A673 (cell line): ENCODE measurements at regions of chr16 and their contacts with region 1.

Region 1: GRCh38 chr16:12819126-12820117 is 15.7 kb upstream of the CPPED1 start:
- DNase-seq: peak; percentile 71
- H3K4me3 ChIP-seq: no peak overlapping the region
- H3K27ac ChIP-seq: no peak overlapping the region
- H3K4me1 ChIP-seq: no peaks in the 10 kb centered on the region
- H3K27me3 ChIP-seq: no peaks in the 10 kb centered on the region
- CTCF ChIP-seq: peak; percentile 81

Region 2: GRCh38 chr16:12455287-12455798 is 364.1 kb before region 1 on chr16:
- CTCF ChIA-PET with region 1: no interaction called
- POLR2A ChIA-PET with region 1: no interaction called
- intact Hi-C with region 1: loop called (anchors 2 kb)
- DNase-seq: peak; percentile 53
- H3K4me3 ChIP-seq: no peak overlapping the region
- H3K27ac ChIP-seq: no peak overlapping the region
- H3K4me1 ChIP-seq: no peaks in the 10 kb centered on the region
- H3K27me3 ChIP-seq: no peaks in the 10 kb centered on the region
- CTCF ChIP-seq: peak; percentile 81

Region 3: DNA sequence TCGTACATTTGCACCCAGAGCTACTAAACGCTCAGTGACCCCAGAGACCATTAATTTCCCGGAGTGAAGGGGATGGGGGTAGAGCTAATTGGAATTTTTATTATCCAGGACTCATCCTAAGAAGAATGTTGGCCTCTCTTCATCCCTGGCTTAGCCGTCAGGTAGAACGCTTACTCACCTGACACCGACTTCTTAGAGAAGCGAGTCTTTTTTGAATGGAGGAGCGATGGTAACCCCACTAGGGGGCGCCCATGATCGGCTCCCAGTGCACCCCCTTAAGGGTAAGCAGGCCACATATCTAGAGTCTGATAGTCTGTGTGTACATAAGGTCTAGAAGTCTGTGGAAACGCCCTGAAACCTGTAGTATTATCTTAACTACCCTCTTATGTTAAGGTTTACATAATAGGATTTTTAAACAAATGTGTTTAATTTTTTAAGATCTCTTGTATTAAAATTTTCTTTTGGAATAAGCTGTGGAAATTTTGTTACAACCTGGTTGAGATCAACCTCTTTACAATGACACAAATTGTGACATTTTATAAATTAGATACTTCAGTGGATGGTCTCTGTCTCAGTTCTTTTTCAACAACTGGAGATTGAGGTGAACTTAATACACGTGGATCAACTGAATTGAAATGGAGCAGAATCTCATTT is 245.6 kb before region 1 on chr16:
- CTCF ChIA-PET with region 1: interaction called, 3 read pairs
- POLR2A ChIA-PET with region 1: no interaction called
- intact Hi-C with region 1: loop called (anchors 2 kb)
- DNase-seq: peak; percentile 46
- H3K4me3 ChIP-seq: no peak overlapping the region
- H3K27ac ChIP-seq: no peak overlapping the region
- H3K4me1 ChIP-seq: no peaks in the 10 kb centered on the region
- H3K27me3 ChIP-seq: no peaks in the 10 kb centered on the region
- CTCF ChIP-seq: peak; percentile 74

Region 4: GRCh38 chr16:12760819-12761601 is 58.4 kb before region 1 on chr16:
- CTCF ChIA-PET with region 1: interaction called, 10 read pairs
- POLR2A ChIA-PET with region 1: no interaction called
- intact Hi-C with region 1: no loop called
- DNase-seq: no peak
- H3K4me3 ChIP-seq: no peak overlapping the region
- H3K27ac ChIP-seq: no peak overlapping the region
- H3K4me1 ChIP-seq: no peaks in the 10 kb centered on the region
- H3K27me3 ChIP-seq: no peaks in the 10 kb centered on the region
- CTCF ChIP-seq: no peak

Region 5: GRCh38 chr16:12846592-12846991 is 27.2 kb after region 1 on chr16:
- CTCF ChIA-PET with region 1: no interaction called
- POLR2A ChIA-PET with region 1: no interaction called
- intact Hi-C with region 1: no loop called
- DNase-seq: no peak
- H3K4me3 ChIP-seq: no peak overlapping the region
- H3K27ac ChIP-seq: no peak overlapping the region
- H3K4me1 ChIP-seq: no peaks in the 10 kb centered on the region
- H3K27me3 ChIP-seq: no peaks in the 10 kb centered on the region
- CTCF ChIP-seq: no peak